Calu3 (cell line): ENCODE measurements at regions of chr13 and their contacts with region 1.

Region 1: GRCh38 chr13:78589206-78589605 is 14.1 kb downstream of the POU4F1 start:
- DNase-seq: peak; percentile 12
- H3K4me3 Mint-ChIP-seq: no peak overlapping the region
- H3K27ac Mint-ChIP-seq: no peak overlapping the region
- H3K4me1 Mint-ChIP-seq: no peaks in the 10 kb centered on the region
- H3K27me3 Mint-ChIP-seq: peaks cover 12% of the 10 kb centered on the region
- CTCF ChIP-seq: no peak

Region 2: DNA sequence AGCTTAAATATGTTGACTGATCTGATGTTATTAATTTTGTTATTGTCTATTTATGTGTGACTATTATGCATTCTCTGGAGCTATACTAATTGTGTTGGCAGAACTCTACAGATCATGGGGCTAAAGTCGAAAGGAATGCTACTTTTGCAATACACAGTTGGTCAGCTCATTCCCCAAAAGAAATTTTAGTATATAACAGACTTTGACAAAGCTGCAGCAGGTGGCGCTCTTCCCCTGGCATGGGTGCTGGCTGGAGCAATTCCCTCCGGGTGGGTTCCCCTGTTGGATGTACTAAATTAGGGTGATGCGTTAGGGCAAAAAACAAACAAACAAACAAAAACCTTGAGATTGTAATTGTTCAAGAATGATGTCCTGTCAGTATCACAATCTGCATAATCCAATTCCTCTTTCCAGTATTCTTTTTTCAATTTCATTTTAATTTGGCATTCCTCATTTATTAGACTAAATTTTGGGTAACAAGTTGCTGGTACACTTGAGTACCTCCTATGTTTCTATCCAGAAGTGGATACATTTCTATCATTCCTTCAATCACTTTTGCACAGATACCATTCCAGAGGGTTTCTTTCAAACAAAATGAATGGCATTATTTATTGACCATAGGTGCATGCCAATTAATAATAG is 347.8 kb before region 1 on chr13:
- CTCF ChIA-PET with region 1: no interaction called
- intact Hi-C with region 1: loop called (anchors 10 kb)
- DNase-seq: peak; percentile 16
- H3K4me3 Mint-ChIP-seq: no peak overlapping the region
- H3K27ac Mint-ChIP-seq: no peak overlapping the region
- H3K4me1 Mint-ChIP-seq: no peaks in the 10 kb centered on the region
- H3K27me3 Mint-ChIP-seq: no peaks in the 10 kb centered on the region
- CTCF ChIP-seq: peak; percentile 25